Mammary epithelial cell (primary cell): ENCODE measurements at regions of chr6 and their contacts with region 1.

Region 1: DNA sequence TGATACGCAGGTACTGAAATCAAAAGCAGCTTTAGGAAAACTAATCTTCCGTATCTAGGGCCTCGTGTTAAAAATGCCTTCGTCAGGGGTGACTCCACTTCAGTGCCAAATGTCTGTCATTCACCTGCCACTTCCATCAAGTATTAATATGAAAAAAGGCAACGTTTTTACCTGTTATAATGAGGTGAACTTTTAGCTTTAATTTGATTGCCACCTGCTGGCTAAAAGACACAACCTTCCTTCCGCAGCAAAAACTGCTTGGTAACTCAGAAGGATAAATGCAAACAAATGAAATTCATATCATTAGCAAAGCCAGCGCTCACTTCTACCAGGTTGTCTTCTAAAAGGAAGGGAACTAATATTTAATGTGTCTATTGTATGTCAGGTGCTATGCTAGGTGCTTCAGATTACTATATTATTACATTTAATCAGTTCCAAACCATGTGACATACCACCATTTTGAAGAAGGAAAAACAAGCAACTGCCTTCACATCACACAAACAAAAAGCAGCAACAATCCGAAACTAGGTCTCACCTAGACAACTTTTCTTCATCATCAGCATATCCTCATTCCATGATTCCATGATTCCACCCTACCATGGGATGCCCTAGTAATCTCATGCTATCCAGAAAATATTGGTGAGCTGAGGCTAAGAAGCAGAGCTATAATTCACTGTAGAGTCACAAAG is 20.6 kb upstream of the ARHGAP18 start:
- DNase-seq: no peak
- H3K4me3 ChIP-seq: no peak overlapping the region
- H3K27ac ChIP-seq: peak overlapping the region; percentile 9
- H3K4me1 ChIP-seq: peaks cover 20% of the 10 kb centered on the region
- H3K27me3 ChIP-seq: no peaks in the 10 kb centered on the region
- CTCF ChIP-seq: peak; percentile 47 to 63

Region 2: GRCh38 chr6:129667621-129668020 is 63.0 kb before region 1 on chr6:
- CTCF ChIA-PET with region 1: no interaction called
- dilution Hi-C with region 1: no loop called
- in situ Hi-C with region 1: no loop called
- intact Hi-C with region 1: loop called (anchors 1 kb)
- DNase-seq: peak; percentile 57
- H3K4me3 ChIP-seq: no peak overlapping the region
- H3K27ac ChIP-seq: no peak overlapping the region
- H3K4me1 ChIP-seq: peaks cover 21% of the 10 kb centered on the region
- H3K27me3 ChIP-seq: no peaks in the 10 kb centered on the region
- CTCF ChIP-seq: no peak

Region 3: DNA sequence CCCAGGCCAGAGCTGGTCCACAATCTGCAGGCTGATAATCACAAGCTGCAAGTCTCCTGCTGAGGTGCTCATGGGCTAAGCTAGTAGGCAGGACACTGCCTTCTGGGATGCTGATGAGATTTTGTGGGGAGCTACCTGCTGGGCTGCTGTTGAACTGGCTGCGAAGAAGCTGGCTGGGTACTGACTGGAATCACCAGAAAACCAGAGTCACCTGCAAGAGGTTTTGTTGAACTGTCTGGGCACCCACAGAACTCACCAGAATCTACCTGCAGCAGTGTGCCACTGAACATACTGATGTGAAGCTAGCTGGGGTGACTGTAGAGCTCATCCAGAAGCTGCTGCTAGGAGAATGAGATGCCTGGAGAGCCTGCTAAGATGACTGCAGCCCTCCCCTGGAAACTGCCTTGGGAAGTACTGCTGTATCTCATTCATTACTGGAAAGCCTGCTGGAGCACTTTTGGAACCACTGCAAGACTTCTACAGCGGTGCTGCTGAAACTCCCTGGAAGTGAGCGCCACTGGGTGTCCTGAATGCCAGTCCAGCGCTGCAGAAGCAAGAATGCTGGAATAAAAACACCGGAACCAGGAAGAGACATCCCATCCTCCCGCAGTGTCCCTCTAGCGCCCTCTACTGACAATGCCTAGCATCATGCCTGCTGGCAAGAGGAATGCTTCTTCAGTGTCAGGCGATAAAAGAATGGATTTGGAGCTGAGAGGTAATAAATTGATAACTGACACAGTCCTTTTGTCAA is 44.3 kb after region 1 on chr6:
- CTCF ChIA-PET with region 1: no interaction called
- dilution Hi-C with region 1: no loop called
- in situ Hi-C with region 1: no loop called
- intact Hi-C with region 1: loop called (anchors 1 kb)
- DNase-seq: peak; percentile 53
- H3K4me3 ChIP-seq: no peak overlapping the region
- H3K27ac ChIP-seq: no peak overlapping the region
- H3K4me1 ChIP-seq: no peaks in the 10 kb centered on the region
- H3K27me3 ChIP-seq: no peaks in the 10 kb centered on the region
- CTCF ChIP-seq: peak; percentile 99

Region 4: GRCh38 chr6:129860908-129861665 is 130.5 kb after region 1 on chr6 and contains the start of gene TMEM244:
- CTCF ChIA-PET with region 1: no interaction called
- dilution Hi-C with region 1: no loop called
- in situ Hi-C with region 1: no loop called
- intact Hi-C with region 1: no loop called
- DNase-seq: no peak
- H3K4me3 ChIP-seq: no peak within 1 kb of the TSS
- H3K27ac ChIP-seq: no peak within 1 kb of the TSS
- H3K4me1 ChIP-seq: peaks cover 17% of the 10 kb centered on the region
- H3K27me3 ChIP-seq: no peaks in the 10 kb centered on the region
- CTCF ChIP-seq: no peak
- total RNA-seq, gene TMEM244: not detected

Region 5: GRCh38 chr6:129981598-129981997 is 251.0 kb after region 1 on chr6:
- CTCF ChIA-PET with region 1: no interaction called
- dilution Hi-C with region 1: no loop called
- in situ Hi-C with region 1: no loop called
- intact Hi-C with region 1: loop called (anchors 2 kb)
- DNase-seq: peak; percentile 2
- H3K4me3 ChIP-seq: no peak overlapping the region
- H3K27ac ChIP-seq: no peak overlapping the region
- H3K4me1 ChIP-seq: no peaks in the 10 kb centered on the region
- H3K27me3 ChIP-seq: no peaks in the 10 kb centered on the region
- CTCF ChIP-seq: peak; percentile 29 to 50